WTC11 (cell line): ENCODE measurements at regions of chr9 and their contacts with region 1.

Region 1: GRCh38 chr9:109411798-109412352 is 86.2 kb downstream of the PTPN3 start:
- DNase-seq: no peak
- ATAC-seq: no peak; the same call in 1 of the 2 replicates
- H3K4me3 Mint-ChIP-seq: no peak overlapping the region
- H3K27ac Mint-ChIP-seq: peak overlapping the region; percentile 68; the same call in 1 of the 2 replicates
- H3K4me1 Mint-ChIP-seq: peaks cover 61% of the 10 kb centered on the region
- H3K27me3 Mint-ChIP-seq: no peaks in the 10 kb centered on the region
- CTCF ChIP-seq: peak; percentile 41; the same call in 1 of the 2 replicates

Region 2: DNA sequence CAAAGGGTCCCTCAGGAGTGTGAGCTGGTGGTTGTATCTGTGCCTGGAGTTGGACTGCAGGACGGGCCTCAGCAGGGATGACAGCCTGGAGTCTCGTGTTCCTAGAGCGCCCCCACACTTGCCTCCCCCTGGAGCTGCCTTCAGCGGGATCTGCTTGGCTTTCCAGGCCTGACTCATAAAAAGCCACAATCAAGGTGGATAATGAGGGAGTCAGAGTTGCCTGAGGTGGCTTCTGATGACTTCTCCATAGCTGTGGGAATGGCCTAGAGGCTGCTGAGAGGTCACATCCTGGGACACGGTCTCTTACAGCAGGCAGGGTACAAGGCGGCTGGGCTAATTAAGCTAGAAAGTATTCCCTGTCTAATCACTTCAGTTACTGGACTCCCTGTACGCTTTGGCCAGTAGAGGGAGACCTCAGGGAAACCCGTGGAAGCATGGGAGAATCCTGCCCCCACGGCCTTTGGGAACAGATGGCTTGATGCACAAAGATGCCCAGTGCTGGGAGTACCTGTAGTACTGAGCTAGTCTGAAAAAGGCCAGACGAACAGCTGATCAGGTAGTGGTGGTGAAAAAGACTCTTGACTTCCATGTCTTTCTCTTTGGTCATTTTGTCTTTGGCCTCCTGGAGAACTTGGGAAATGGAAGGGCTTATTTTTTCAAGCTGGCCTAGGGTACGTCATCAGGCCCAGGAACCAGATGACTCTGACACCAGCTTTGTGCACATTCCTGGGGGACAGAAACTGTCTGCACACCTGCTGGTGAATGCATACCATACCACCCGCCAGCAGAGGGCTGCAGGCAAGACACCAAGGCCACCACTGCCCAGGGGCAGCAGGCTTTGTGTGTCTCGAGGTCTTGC is 228.7 kb before region 1 on chr9:
- CTCF ChIA-PET with region 1: interaction called, 58 read pairs
- POLR2A ChIA-PET with region 1: interaction called, 3 read pairs
- DNase-seq: peak; percentile 64
- ATAC-seq: peak; percentile 77
- H3K4me3 Mint-ChIP-seq: no peak overlapping the region
- H3K27ac Mint-ChIP-seq: peak overlapping the region; percentile 4; the same call in 1 of the 2 replicates
- H3K4me1 Mint-ChIP-seq: peaks cover 3% of the 10 kb centered on the region; the same call in 1 of the 2 replicates
- H3K27me3 Mint-ChIP-seq: no peaks in the 10 kb centered on the region
- CTCF ChIP-seq: peak; percentile 35; the same call in 1 of the 2 replicates

Region 3: GRCh38 chr9:109206670-109207069 is 205.2 kb before region 1 on chr9:
- CTCF ChIA-PET with region 1: interaction called, 11 read pairs
- POLR2A ChIA-PET with region 1: no interaction called
- DNase-seq: peak; percentile 66
- ATAC-seq: peak; percentile 98
- H3K4me3 Mint-ChIP-seq: no peak overlapping the region
- H3K27ac Mint-ChIP-seq: no peak overlapping the region
- H3K4me1 Mint-ChIP-seq: no peaks in the 10 kb centered on the region
- H3K27me3 Mint-ChIP-seq: no peaks in the 10 kb centered on the region; the same call in 1 of the 2 replicates
- CTCF ChIP-seq: 0 out of 2 replicates have a peak, but pooled peaks have one; percentile 26

Region 4: GRCh38 chr9:109286571-109286977 is 125.3 kb before region 1 on chr9:
- CTCF ChIA-PET with region 1: no interaction called
- POLR2A ChIA-PET with region 1: no interaction called
- DNase-seq: no peak
- ATAC-seq: no peak
- H3K4me3 Mint-ChIP-seq: no peak overlapping the region
- H3K27ac Mint-ChIP-seq: no peak overlapping the region
- H3K4me1 Mint-ChIP-seq: peaks cover 33% of the 10 kb centered on the region
- H3K27me3 Mint-ChIP-seq: no peaks in the 10 kb centered on the region
- CTCF ChIP-seq: no peak

Region 5: GRCh38 chr9:109346904-109347303 is 65.0 kb before region 1 on chr9:
- CTCF ChIA-PET with region 1: interaction called, 29 read pairs
- POLR2A ChIA-PET with region 1: no interaction called
- DNase-seq: no peak
- ATAC-seq: no peak
- H3K4me3 Mint-ChIP-seq: no peak overlapping the region
- H3K27ac Mint-ChIP-seq: no peak overlapping the region
- H3K4me1 Mint-ChIP-seq: peaks cover 11% of the 10 kb centered on the region
- H3K27me3 Mint-ChIP-seq: no peaks in the 10 kb centered on the region; the same call in 1 of the 2 replicates
- CTCF ChIP-seq: no peak

Region 6: GRCh38 chr9:109428854-109429253 is 17.0 kb after region 1 on chr9:
- CTCF ChIA-PET with region 1: interaction called, 50 read pairs
- POLR2A ChIA-PET with region 1: no interaction called
- DNase-seq: no peak
- ATAC-seq: no peak
- H3K4me3 Mint-ChIP-seq: no peak overlapping the region
- H3K27ac Mint-ChIP-seq: no peak overlapping the region
- H3K4me1 Mint-ChIP-seq: no peaks in the 10 kb centered on the region
- H3K27me3 Mint-ChIP-seq: no peaks in the 10 kb centered on the region
- CTCF ChIP-seq: no peak

Region 7: DNA sequence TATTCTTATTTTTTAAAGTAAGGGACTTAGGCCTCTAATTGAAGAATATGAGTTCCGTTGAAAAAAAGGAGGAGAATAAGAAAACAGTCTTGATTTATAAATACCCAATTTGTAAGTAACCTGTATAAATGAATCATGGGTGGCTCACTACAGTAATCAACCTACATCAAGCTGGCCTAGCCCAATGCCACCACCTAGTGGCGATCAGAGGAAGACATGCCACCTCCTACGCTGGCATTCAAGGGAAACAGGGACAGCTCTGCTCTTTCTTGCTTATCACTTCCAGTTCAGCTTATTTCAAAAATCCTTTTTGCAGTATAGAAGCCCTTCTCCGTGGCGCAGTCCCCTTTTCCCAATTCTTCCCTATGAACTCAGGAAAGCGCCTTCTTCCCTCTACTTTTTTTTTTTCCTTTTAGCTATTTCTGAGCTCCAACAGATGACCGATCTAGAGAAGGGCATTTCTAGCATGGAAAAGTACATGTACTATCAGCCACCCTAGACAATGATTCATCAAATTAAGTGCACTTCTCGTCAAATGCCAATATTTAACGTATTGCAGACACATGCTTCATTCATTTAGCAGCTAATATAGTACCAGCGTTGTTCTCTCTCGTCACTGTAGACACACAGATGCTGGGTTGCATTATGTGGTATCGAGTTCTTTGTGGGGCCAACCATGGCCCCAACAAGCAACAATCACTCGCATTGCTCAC is 57.9 kb after region 1 on chr9:
- CTCF ChIA-PET with region 1: interaction called, 28 read pairs
- POLR2A ChIA-PET with region 1: no interaction called
- DNase-seq: peak; percentile 75
- ATAC-seq: peak; percentile 98
- H3K4me3 Mint-ChIP-seq: no peak overlapping the region
- H3K27ac Mint-ChIP-seq: no peak overlapping the region
- H3K4me1 Mint-ChIP-seq: peaks cover 3% of the 10 kb centered on the region; the same call in 1 of the 2 replicates
- H3K27me3 Mint-ChIP-seq: no peaks in the 10 kb centered on the region
- CTCF ChIP-seq: peak; percentile 69